ENCODE measurements at regions of chr1 and their contacts with region 1.

Region 1: GRCh38 chr1:223845810-223846682 is at the start of gene TP53BP2:
- DNase-seq: peak; percentile 70 to 97
- H3K4me3 ChIP-seq: peak within 1 kb of the TSS; percentile 72
- H3K27ac ChIP-seq: peak within 1 kb of the TSS; percentile 95
- H3K4me1 ChIP-seq: peaks cover 44% of the 10 kb centered on the region
- H3K27me3 ChIP-seq: no peaks in the 10 kb centered on the region
- CTCF ChIP-seq: peak; percentile 66
- total RNA-seq, gene TP53BP2: 63.1 and 81.4 TPM in 2 replicates

Region 2: GRCh38 chr1:223707256-223708000 is 138.6 kb before region 1 on chr1:
- CTCF ChIA-PET with region 1: no interaction called
- POLR2A ChIA-PET with region 1: interaction called, 3 read pairs
- intact Hi-C with region 1: loop called (anchors 2 kb)
- DNase-seq: peak; percentile 86 to 96
- H3K4me3 ChIP-seq: peak overlapping the region; percentile 45; the same call in 1 of the 2 replicates
- H3K27ac ChIP-seq: peak overlapping the region; percentile 96
- H3K4me1 ChIP-seq: peaks cover 94% of the 10 kb centered on the region
- H3K27me3 ChIP-seq: no peaks in the 10 kb centered on the region
- CTCF ChIP-seq: no peak

Region 3: GRCh38 chr1:223819730-223820514 is 26.1 kb before region 1 on chr1:
- CTCF ChIA-PET with region 1: interaction called, 7 read pairs
- POLR2A ChIA-PET with region 1: interaction called, 7 read pairs
- intact Hi-C with region 1: loop called (anchors 2 kb)
- DNase-seq: peak; percentile 31 to 89
- H3K4me3 ChIP-seq: no peak overlapping the region
- H3K27ac ChIP-seq: peak overlapping the region; percentile 80
- H3K4me1 ChIP-seq: peaks cover 43% of the 10 kb centered on the region
- H3K27me3 ChIP-seq: no peaks in the 10 kb centered on the region
- CTCF ChIP-seq: no peak

Region 4: GRCh38 chr1:223887747-223888418 is 41.8 kb after region 1 on chr1:
- CTCF ChIA-PET with region 1: no interaction called
- POLR2A ChIA-PET with region 1: interaction called, 7 read pairs
- intact Hi-C with region 1: loop called (anchors 1 kb)
- DNase-seq: peak; percentile 87 to 99
- H3K4me3 ChIP-seq: peak overlapping the region; percentile 42; the same call in 1 of the 2 replicates
- H3K27ac ChIP-seq: peak overlapping the region; percentile 94
- H3K4me1 ChIP-seq: peaks cover 36% of the 10 kb centered on the region
- H3K27me3 ChIP-seq: no peaks in the 10 kb centered on the region
- CTCF ChIP-seq: no peak

Region 5: DNA sequence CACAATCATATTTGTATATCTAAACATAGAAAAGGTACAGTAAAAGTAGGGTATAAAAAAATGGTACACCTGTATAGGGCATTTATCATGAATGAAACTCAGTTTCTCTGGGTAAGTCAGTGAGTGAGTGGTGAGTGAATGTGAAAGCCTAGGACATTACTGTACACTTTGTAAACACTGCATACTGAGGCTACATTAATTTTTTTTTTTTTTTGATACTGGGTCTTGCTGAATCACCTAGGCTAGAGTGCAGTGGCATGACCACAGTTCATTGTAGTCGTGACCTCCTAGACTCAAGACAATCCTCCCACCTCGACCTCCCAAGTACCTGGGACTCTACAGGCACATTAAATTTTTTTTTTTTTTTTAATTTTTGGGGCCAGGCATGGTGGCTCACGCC is 295.6 kb after region 1 on chr1:
- CTCF ChIA-PET with region 1: no interaction called
- POLR2A ChIA-PET with region 1: no interaction called
- intact Hi-C with region 1: no loop called
- DNase-seq: no peak
- H3K4me3 ChIP-seq: no peak overlapping the region
- H3K27ac ChIP-seq: no peak overlapping the region
- H3K4me1 ChIP-seq: no peaks in the 10 kb centered on the region
- H3K27me3 ChIP-seq: no peaks in the 10 kb centered on the region
- CTCF ChIP-seq: no peak

Region 6: GRCh38 chr1:224368409-224368808 is 522.4 kb after region 1 on chr1:
- CTCF ChIA-PET with region 1: no interaction called
- POLR2A ChIA-PET with region 1: no interaction called
- intact Hi-C with region 1: no loop called
- DNase-seq: no peak
- H3K4me3 ChIP-seq: no peak overlapping the region
- H3K27ac ChIP-seq: no peak overlapping the region
- H3K4me1 ChIP-seq: no peaks in the 10 kb centered on the region
- H3K27me3 ChIP-seq: no peaks in the 10 kb centered on the region
- CTCF ChIP-seq: no peak

Region 7: GRCh38 chr1:225746361-225747179 is 1900.5 kb after region 1 on chr1:
- CTCF ChIA-PET with region 1: no interaction called
- POLR2A ChIA-PET with region 1: interaction called, 12 read pairs
- intact Hi-C with region 1: no loop called
- DNase-seq: peak; percentile 59 to 74
- H3K4me3 ChIP-seq: peak overlapping the region; percentile 55; the same call in 1 of the 2 replicates
- H3K27ac ChIP-seq: peak overlapping the region; percentile 60
- H3K4me1 ChIP-seq: peaks cover 13% of the 10 kb centered on the region
- H3K27me3 ChIP-seq: no peaks in the 10 kb centered on the region
- CTCF ChIP-seq: no peak

Measured in PC-9 (cell line).